ENCODE measurements at regions of chr2 and their contacts with region 1.

Region 1: GRCh38 chr2:224284134-224284946 is 117.6 kb downstream of the FAM124B start:
- DNase-seq: peak; percentile 43
- H3K4me3 ChIP-seq: no peak overlapping the region
- H3K27ac ChIP-seq: no peak overlapping the region
- H3K4me1 ChIP-seq: no peaks in the 10 kb centered on the region
- H3K27me3 ChIP-seq: peaks cover 2% of the 10 kb centered on the region
- CTCF ChIP-seq: peak; percentile 54 to 80

Region 2: GRCh38 chr2:222976521-222977076 is 1307.7 kb before region 1 on chr2:
- CTCF ChIA-PET with region 1: interaction called, 7 read pairs
- dilution Hi-C with region 1: no loop called
- in situ Hi-C with region 1: no loop called
- intact Hi-C with region 1: loop called (anchors 5 kb)
- DNase-seq: no peak
- H3K4me3 ChIP-seq: no peak overlapping the region
- H3K27ac ChIP-seq: no peak overlapping the region
- H3K4me1 ChIP-seq: peaks cover 15% of the 10 kb centered on the region
- H3K27me3 ChIP-seq: no peaks in the 10 kb centered on the region
- CTCF ChIP-seq: no peak

Region 3: DNA sequence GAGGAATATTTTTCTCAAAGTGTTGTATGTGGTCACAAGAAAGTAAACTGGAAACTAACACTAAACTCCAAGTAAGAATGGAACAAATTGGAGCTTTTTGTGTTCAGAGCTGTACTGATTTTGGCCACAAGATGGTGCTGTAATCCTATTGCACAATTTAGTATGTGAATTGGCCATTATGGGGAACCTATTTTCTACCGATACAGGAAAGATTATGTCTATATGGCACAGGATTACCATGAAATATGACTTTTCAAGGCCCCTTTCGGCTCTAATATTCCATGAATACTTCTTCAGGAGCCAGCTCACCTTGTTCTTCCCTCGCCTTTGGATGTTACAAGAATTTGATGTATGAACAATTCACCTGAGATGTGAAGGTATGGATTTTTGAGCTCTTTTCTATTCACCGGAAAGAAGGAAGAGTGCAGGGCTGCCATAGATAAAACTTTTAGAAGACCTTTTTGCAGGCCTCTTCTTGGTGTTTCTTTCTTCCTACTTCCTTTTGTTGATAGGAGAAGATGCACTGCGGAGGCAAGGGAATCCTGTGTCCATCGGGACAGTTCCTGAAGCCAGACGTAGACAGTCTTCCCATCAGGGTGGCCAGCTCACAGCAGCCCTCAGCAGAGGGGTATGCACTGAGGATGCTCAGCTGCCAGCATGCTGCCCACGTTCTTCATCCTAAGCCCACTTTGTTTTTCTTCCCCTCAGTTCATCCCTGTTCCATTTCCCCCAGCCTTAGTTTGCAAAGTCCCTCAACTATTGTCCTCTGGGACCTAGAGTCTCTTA is 313.8 kb before region 1 on chr2:
- CTCF ChIA-PET with region 1: interaction called, 33 read pairs
- dilution Hi-C with region 1: loop called (anchors 25 kb)
- in situ Hi-C with region 1: no loop called
- intact Hi-C with region 1: loop called (anchors 1 kb)
- DNase-seq: peak; percentile 50
- H3K4me3 ChIP-seq: no peak overlapping the region
- H3K27ac ChIP-seq: no peak overlapping the region
- H3K4me1 ChIP-seq: no peaks in the 10 kb centered on the region
- H3K27me3 ChIP-seq: no peaks in the 10 kb centered on the region
- CTCF ChIP-seq: peak; percentile 88 to 96

Region 4: DNA sequence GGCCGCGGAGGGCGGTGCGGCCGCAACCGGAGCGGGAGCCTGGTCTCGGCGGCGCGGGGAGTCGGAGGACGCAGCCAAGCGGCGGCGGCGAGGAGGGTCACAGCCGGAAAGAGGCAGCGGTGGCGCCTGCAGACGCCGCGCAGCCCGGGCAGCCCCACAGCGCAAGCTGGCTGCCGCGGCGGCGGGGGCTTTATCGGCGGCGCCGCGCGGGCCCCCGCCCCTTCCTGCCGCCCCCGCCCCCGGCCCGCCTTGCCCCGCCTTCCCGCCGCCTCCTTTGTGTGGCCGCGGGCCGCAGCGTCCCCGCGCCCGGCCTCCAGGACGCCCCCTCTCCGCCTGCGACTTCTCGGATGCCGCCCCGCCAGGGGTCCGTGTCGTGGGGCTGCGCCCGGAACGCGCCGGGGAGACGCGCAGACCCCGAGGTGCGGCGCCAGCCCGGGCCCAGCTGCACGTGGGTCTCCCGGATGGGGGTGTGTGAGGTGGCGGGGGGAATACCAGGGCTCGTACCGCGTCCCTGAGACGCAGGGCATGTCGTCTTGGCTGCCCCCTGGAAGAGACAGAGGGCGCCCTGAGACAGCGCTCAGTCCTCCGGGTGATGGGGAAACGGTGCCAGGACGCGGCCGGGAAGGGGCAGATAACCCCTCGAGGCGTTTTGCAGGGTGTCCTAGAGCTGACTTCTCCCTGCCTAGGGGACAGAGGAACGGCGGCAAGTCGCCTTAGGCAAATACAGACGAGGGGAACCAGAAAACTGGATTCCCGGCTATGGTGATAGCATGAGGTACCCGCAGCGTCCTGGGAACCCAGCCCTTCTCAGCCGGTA is 245.0 kb before region 1 on chr2 and contains the start of gene SERPINE2:
- CTCF ChIA-PET with region 1: no interaction called
- dilution Hi-C with region 1: no loop called
- in situ Hi-C with region 1: no loop called
- intact Hi-C with region 1: loop called (anchors 1 kb)
- DNase-seq: peak; percentile 63
- H3K4me3 ChIP-seq: peak within 1 kb of the TSS; percentile 80 to 92 (median 81)
- H3K27ac ChIP-seq: peak within 1 kb of the TSS; percentile 24
- H3K4me1 ChIP-seq: peaks cover 25% of the 10 kb centered on the region
- H3K27me3 ChIP-seq: no peaks in the 10 kb centered on the region
- CTCF ChIP-seq: peak in 1 of 2 donors; percentile 59
- total RNA-seq, gene SERPINE2: 490 to 535 TPM

Region 5: GRCh38 chr2:224145751-224146355 is 138.5 kb before region 1 on chr2:
- CTCF ChIA-PET with region 1: no interaction called
- dilution Hi-C with region 1: no loop called
- in situ Hi-C with region 1: no loop called
- intact Hi-C with region 1: loop called (anchors 1 kb)
- DNase-seq: peak; percentile 84
- H3K4me3 ChIP-seq: no peak overlapping the region
- H3K27ac ChIP-seq: peak overlapping the region; percentile 64
- H3K4me1 ChIP-seq: peaks cover 46% of the 10 kb centered on the region
- H3K27me3 ChIP-seq: no peaks in the 10 kb centered on the region
- CTCF ChIP-seq: no peak